ENCODE measurements at regions of chr20 and their contacts with region 1.

Region 1: DNA sequence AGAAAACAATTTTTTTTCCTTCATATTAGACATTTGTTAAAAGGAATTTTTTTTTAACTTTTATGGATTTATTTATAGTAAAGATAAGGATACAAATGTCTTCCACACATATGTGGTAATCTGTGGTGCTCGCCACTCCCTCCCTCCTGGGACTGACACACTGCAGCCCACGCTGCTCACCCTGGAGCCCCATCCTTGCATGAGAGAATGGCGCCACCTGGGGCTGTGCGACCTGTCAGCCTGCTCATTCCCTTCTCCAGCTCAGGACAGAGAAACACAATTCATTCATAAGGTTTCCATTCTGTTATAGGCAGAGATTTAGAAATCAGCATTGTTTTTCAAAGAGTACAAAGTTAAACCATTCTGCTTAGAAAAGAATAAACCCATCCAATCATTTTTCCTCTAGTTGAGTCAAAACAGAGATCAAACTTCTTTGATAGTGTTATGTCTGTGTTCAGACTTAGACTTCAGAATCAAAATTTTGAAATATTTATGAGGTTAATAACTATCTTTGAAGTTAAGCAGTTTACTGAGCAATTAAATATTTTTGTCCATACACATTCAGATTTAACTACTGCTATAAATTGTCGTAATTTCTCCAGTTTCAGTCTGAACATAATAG is 42.8 kb upstream of the DYNLRB1 start:
- DNase-seq: peak; percentile 50
- ATAC-seq: peak; percentile 86 to 90

Region 2: GRCh38 chr20:34190679-34191090 is 282.7 kb before region 1 on chr20:
- intact Hi-C with region 1: loop called in 1 of 2 experiments (anchors 10 kb)
- DNase-seq: peak; percentile 61
- ATAC-seq: peak; percentile 92 to 95

Region 3: GRCh38 chr20:34312544-34313217 is 160.7 kb before region 1 on chr20:
- intact Hi-C with region 1: loop called (anchors 2 to 5 kb)
- DNase-seq: peak; percentile 87
- ATAC-seq: peak; percentile 98 to 99

Region 4: DNA sequence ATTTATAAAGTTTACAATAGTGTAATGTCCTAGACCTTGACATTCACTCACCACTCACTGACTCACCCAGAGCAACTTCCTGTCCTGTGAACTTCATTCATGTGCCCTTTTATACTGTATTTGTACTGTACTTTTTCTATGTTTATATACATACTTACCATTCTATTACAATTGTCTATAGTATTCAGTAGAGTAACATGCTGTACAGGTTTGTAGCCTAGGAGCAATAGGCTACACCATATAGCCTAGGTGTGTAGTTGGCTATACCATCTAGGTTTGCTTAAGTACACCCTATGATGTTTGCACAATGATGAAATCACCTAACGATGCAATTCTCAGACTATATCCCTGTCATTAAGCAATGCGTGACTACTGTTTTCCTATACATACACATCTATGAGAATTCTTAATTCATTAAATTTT is 656.3 kb after region 1 on chr20:
- intact Hi-C with region 1: no loop called
- DNase-seq: no peak
- ATAC-seq: no peak